Adrenal gland (tissue), 19 donors: ENCODE measurements at regions of chr16 and their contacts with region 1.

Region 1: DNA sequence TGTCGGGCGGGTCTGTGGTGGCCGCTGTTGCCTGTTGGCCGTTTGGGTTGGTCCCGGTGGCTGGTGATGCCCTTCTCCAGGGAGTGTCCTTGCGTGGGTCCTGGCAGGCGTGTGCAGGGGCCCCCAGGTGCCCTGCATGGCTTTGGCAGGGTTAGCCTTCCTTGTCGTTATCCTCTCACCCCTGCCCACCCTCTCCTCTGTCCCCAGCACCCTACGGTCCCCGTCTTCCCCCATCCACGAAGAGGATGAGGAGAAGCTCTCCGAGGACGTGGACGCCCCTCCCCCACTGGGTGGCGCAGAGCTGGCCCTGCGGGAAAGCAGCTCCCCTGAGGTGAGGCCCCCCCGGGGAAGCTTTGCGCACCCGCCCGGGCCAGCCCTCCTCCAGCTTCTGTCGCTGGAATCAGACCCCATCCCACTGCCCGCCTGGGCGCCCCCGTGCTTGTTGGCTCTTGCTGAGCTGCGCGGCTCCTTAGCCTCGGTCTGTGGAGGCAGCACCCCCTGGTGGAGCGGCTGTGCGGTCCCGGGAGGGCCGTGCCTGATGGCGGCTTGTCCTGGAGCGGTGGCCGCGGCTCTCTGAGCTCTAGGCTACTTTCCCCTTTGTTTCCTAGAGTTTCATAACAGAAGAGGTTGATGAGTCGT is 10.6 kb upstream of the NUDT16L1 start:
- DNase-seq: peak; percentile 67 to 81 (median 75)
- H3K4me3 ChIP-seq: no peak overlapping the region
- H3K27ac ChIP-seq: peak overlapping the region in 1 of 5 donors; percentile 30
- H3K4me1 ChIP-seq: peaks cover 2 to 10% of the 10 kb centered on the region in 2 donors
- H3K27me3 ChIP-seq: no peaks in the 10 kb centered on the region
- CTCF ChIP-seq: peak; percentile 34 to 75 (median 67)
- POLR2A ChIP-seq: no peak

Region 2: DNA sequence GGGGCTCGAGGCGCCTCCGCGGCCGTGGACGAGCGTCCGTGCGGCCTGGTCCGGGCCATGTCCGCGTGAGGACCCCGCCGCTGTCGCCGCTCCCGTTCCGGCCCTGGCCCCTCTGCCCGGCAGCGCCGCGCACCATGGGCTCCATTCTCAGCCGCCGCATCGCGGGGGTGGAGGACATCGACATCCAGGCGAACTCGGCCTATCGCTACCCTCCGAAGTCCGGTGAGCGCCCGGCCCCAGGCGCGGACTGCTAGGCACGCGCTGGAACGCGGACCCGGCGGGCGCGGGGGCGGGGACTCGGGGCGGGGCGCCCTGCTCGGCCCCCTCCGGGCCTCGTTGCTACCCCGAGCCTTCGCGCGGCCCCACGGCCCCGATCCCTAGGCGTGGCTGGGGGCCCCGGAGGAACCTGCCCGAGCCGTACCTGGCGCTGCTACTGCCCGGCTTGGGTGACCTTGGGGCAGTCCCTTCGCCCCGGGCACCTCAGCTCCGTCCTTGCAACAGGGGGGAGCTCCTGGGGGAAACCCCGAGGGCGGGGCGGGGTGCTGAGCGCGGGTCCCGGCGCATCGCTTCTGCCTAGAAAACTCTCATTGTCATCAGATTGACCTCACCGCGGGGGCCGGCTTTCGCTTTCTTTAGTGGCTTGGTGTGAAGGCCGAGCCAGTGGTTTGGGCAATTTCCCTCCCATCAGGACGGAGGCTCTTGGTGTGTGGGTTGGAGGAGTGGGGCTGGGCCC is 57.7 kb before region 1 on chr16:
- intact Hi-C with region 1: loop called in 1 of 2 experiments (anchors 5 kb)
- DNase-seq: peak; percentile 75 to 93 (median 83)
- H3K4me3 ChIP-seq: peak overlapping the region; percentile 48 to 100 (median 79)
- H3K27ac ChIP-seq: peak overlapping the region; percentile 94 to 100 (median 96)
- H3K4me1 ChIP-seq: peaks cover 8 to 15% of the 10 kb centered on the region in 2 donors
- H3K27me3 ChIP-seq: no peaks in the 10 kb centered on the region
- CTCF ChIP-seq: peak in 1 of 6 experiments; percentile 3
- POLR2A ChIP-seq: peak; percentile 92